CD8-positive, alpha-beta T cell (primary cell): ENCODE measurements at regions of chr7 and their contacts with region 1.

Region 1: GRCh38 chr7:131302876-131303707 is 24.6 kb upstream of the MKLN1 start:
- DNase-seq: peak in 7 of 9 experiments; percentile 19 to 60 (median 38)
- ATAC-seq: peak; percentile 56
- H3K4me3 ChIP-seq: no peak overlapping the region
- H3K4me3 Mint-ChIP-seq: no peak overlapping the region
- H3K27ac ChIP-seq: no peak overlapping the region
- H3K27ac Mint-ChIP-seq: no peak overlapping the region
- H3K4me1 ChIP-seq: no peaks in the 10 kb centered on the region
- H3K4me1 Mint-ChIP-seq: no peaks in the 10 kb centered on the region
- H3K27me3 ChIP-seq: no peaks in the 10 kb centered on the region
- H3K27me3 Mint-ChIP-seq: no peaks in the 10 kb centered on the region
- CTCF ChIP-seq: peak; percentile 50

Region 2: GRCh38 chr7:131292141-131292905 is 10.8 kb before region 1 on chr7:
- CTCF ChIA-PET with region 1: interaction called, 10 read pairs
- POLR2A ChIA-PET with region 1: no interaction called
- intact Hi-C with region 1: no loop called
- DNase-seq: no peak
- ATAC-seq: no peak
- H3K4me3 ChIP-seq: no peak overlapping the region
- H3K4me3 Mint-ChIP-seq: no peak overlapping the region
- H3K27ac ChIP-seq: no peak overlapping the region
- H3K27ac Mint-ChIP-seq: no peak overlapping the region
- H3K4me1 ChIP-seq: no peaks in the 10 kb centered on the region
- H3K4me1 Mint-ChIP-seq: no peaks in the 10 kb centered on the region
- H3K27me3 ChIP-seq: no peaks in the 10 kb centered on the region
- H3K27me3 Mint-ChIP-seq: no peaks in the 10 kb centered on the region
- CTCF ChIP-seq: no peak